Lower leg skin (tissue), 4 donors: ENCODE measurements at regions of chr7 and their contacts with region 1.

Region 1: GRCh38 chr7:65872776-65873581 is at the start of gene VKORC1L1:
- DNase-seq: peak; percentile 92 to 98
- H3K4me3 ChIP-seq: peak within 1 kb of the TSS; percentile 92
- CTCF ChIP-seq: no peak
- POLR2A ChIP-seq: no peak
- total RNA-seq, gene VKORC1L1: 23.5 to 26.4 (median 25.0) TPM

Region 2: GRCh38 chr7:65981965-65982792 is 109.2 kb after region 1 on chr7 and contains the start of gene GUSB:
- intact Hi-C with region 1: loop called (anchors 5 kb)
- DNase-seq: peak; percentile 86 to 98
- H3K4me3 ChIP-seq: peak within 1 kb of the TSS; percentile 81
- CTCF ChIP-seq: no peak
- POLR2A ChIP-seq: no peak
- total RNA-seq, gene GUSB: 13.8 to 22.8 (median 18.8) TPM

Region 3: GRCh38 chr7:66060796-66061195 is 187.8 kb after region 1 on chr7:
- intact Hi-C with region 1: no loop called
- DNase-seq: no peak
- H3K4me3 ChIP-seq: no peak overlapping the region
- CTCF ChIP-seq: no peak
- POLR2A ChIP-seq: no peak